Ascending aorta (tissue), 2 donors: ENCODE measurements at regions of chr5 and their contacts with region 1.

Region 1: DNA sequence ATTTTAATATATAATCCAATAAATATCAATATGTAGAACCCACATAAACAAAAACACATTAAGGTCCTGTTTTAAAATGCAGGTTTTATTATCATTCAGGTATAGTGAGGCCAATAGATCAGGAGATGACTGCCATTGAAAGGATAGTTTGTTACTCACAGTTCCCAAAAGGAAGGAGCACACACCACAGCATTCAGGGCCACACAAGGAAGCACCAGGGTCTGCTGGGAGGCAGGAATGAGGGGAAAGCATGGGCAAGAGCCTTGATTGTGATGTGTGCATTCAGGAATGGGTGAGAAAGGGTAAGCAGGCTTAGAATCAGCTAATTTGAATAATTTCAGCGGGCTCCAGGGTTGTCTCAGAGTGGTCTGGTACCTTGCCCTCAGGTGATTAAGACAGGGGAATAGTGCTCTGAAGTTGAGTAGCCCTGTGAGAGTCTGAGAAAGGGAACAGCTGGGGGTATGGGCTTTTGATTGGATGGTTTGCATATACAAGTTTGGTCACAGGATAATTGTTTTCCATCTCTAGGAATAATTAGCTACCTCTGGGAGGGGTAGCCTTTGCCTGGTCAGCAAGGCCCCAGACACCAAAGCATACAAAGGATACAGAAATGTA is 19.8 kb upstream of the OTULIN start:
- DNase-seq: no peak
- H3K4me3 ChIP-seq: no peak overlapping the region
- H3K27ac ChIP-seq: no peak overlapping the region
- H3K4me1 ChIP-seq: no peaks in the 10 kb centered on the region
- H3K27me3 ChIP-seq: no peaks in the 10 kb centered on the region
- CTCF ChIP-seq: no peak

Region 2: DNA sequence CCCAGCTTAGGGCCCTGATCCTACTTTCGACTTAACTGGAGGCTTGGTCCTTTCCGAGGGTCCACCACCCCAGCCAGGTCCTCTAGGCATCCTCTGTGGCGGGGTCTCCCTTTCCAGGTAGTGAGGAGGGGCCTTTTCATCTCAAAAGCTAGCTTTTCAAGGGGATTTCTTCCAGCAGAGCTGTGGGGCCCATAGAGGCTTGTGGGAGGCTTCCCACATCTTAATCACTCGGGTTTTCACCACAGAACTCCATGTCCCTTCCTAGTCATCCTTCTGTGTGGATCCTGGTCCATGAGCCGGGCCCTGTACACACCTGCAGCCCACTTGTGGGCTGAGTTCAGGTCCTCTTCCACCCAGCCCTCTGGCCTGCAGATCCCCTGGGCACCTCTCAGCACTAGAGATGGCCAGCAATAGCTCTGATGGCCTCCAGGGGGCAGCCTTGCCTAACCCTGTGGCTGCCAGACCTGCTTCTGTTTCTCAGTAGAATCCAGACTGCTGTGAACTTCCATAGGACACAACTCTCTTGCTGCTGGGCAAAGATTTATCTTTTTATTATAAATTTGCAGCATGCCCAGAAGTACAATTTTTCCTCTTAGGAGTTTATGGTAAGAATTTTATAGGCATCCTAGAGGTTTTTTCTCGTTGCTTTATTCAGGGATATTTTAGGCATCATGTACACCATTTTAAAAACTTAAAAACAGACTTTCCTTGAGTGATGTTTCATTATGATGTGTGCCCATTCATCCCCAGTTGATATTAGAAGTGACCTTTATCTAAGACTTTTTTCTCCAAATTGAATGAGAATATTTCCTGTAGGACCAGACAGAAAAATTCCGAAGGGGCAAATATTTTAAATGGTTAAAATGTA is 292.7 kb before region 1 on chr5:
- intact Hi-C with region 1: loop called (anchors 5 kb)
- DNase-seq: peak in 1 of 2 donors; percentile 72
- H3K4me3 ChIP-seq: no peak overlapping the region
- H3K27ac ChIP-seq: no peak overlapping the region
- H3K4me1 ChIP-seq: peaks cover 0 to 7% of the 10 kb centered on the region in 2 donors
- H3K27me3 ChIP-seq: no peaks in the 10 kb centered on the region
- CTCF ChIP-seq: peak; percentile 73 to 98 (median 93)

Region 3: DNA sequence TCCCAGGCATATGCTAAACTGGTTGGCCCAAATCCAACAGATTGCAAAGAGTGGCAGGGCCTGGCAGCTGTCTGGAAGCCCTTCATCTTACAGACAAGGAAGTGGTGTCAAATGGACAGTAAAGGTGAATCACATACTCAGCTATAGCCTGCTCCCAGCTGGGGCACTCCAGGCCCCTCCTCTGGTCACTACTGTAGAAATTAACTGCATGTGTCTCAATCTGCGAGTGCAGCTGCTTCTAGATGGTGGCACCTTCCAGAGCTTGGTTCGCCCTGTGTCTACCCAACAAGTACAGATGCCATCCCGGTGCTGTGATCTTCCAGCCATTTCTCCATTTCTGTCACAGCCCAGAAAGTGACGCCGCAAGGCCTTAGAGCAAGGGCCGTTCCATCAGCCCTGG is 70.0 kb after region 1 on chr5:
- intact Hi-C with region 1: no loop called
- DNase-seq: no peak
- H3K4me3 ChIP-seq: no peak overlapping the region
- H3K27ac ChIP-seq: no peak overlapping the region
- H3K4me1 ChIP-seq: no peaks in the 10 kb centered on the region
- H3K27me3 ChIP-seq: no peaks in the 10 kb centered on the region
- CTCF ChIP-seq: no peak

Region 4: GRCh38 chr5:15215056-15215455 is 570.3 kb after region 1 on chr5:
- intact Hi-C with region 1: no loop called
- DNase-seq: no peak
- H3K4me3 ChIP-seq: no peak overlapping the region
- H3K27ac ChIP-seq: no peak overlapping the region
- H3K4me1 ChIP-seq: no peaks in the 10 kb centered on the region
- H3K27me3 ChIP-seq: no peaks in the 10 kb centered on the region
- CTCF ChIP-seq: no peak